ENCODE measurements at regions of chr6 and their contacts with region 1.

Region 1: DNA sequence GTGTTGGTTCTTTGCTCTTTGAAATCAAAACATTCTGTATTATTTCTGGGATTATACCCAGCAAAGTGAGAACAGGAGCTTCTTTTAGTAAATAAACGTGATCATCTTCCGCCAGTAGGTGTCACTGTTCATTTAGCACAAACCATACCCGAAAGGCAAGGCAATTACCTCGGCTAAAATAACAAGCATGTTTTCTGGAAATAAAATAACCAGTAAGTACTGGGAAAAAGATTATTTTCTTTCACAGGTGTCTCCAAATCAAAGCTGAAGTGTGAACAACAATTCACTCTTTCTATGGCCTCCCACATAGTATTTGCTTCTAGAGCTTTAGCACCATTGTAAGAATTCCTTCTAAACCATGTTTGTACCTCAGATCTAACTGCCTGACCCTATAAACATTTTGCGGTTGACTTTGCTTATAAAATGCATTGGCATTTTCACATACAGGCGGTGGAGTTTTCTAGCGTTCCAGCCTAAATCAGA is 144.6 kb upstream of the AGPAT4 start:
- DNase-seq: peak; percentile 61
- H3K4me3 ChIP-seq: no peak overlapping the region
- H3K27ac ChIP-seq: peak overlapping the region in 1 of 2 experiments; percentile 70; a peak in 2 of 4 replicates
- H3K4me1 ChIP-seq: peaks cover 0 to 22% of the 10 kb centered on the region in 2 experiments; a peak in 2 of 4 replicates
- H3K27me3 ChIP-seq: no peaks in the 10 kb centered on the region
- CTCF ChIP-seq: peak; percentile 82
- EP300 ChIP-seq: no peak
- RAD21 ChIP-seq: peak; percentile 85

Region 2: GRCh38 chr6:161400671-161401070 is 17.8 kb before region 1 on chr6:
- CTCF ChIA-PET with region 1: interaction called, 52 read pairs
- POLR2A ChIA-PET with region 1: no interaction called
- DNase-seq: no peak
- H3K4me3 ChIP-seq: no peak overlapping the region
- H3K27ac ChIP-seq: no peak overlapping the region
- H3K4me1 ChIP-seq: peaks cover 0 to 17% of the 10 kb centered on the region in 2 experiments; a peak in 1 of 4 replicates
- H3K27me3 ChIP-seq: 0 out of 2 replicates have a peak, but pooled peaks cover 4% of the 10 kb centered on the region
- CTCF ChIP-seq: no peak
- EP300 ChIP-seq: no peak
- RAD21 ChIP-seq: no peak

Region 3: DNA sequence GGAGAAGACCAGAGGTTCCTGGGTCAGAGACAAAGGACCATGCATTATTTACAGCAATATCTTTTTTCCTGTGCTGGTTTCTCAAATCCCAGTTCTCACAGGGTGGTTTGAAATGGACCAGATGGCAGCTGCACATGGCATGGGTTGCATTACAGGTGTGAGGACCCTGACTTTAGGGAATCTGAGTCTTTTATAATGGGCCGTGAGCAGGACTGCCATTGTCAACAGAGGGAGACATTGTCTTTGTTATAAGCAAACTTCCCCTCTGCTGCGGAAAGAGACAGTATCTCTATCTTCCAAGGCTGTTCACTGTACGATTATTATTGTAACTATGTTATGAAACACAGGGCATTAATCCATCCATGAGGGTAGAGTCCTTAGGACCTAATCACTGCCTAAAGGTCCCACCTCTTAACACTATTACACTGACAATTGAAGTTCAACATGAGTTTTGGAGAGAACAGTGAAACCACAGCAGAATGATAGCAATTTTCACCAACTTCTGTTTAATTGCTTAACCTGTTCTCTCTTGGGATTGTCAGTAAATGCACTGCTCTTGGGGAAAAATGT is 11.5 kb after region 1 on chr6:
- CTCF ChIA-PET with region 1: interaction called, 36 read pairs
- POLR2A ChIA-PET with region 1: no interaction called
- DNase-seq: no peak
- H3K4me3 ChIP-seq: no peak overlapping the region
- H3K27ac ChIP-seq: no peak overlapping the region
- H3K4me1 ChIP-seq: peaks cover 0 to 2% of the 10 kb centered on the region in 2 experiments; a peak in 1 of 4 replicates
- H3K27me3 ChIP-seq: no peaks in the 10 kb centered on the region
- CTCF ChIP-seq: peak; percentile 48
- EP300 ChIP-seq: no peak
- RAD21 ChIP-seq: peak; percentile 44

Region 4: DNA sequence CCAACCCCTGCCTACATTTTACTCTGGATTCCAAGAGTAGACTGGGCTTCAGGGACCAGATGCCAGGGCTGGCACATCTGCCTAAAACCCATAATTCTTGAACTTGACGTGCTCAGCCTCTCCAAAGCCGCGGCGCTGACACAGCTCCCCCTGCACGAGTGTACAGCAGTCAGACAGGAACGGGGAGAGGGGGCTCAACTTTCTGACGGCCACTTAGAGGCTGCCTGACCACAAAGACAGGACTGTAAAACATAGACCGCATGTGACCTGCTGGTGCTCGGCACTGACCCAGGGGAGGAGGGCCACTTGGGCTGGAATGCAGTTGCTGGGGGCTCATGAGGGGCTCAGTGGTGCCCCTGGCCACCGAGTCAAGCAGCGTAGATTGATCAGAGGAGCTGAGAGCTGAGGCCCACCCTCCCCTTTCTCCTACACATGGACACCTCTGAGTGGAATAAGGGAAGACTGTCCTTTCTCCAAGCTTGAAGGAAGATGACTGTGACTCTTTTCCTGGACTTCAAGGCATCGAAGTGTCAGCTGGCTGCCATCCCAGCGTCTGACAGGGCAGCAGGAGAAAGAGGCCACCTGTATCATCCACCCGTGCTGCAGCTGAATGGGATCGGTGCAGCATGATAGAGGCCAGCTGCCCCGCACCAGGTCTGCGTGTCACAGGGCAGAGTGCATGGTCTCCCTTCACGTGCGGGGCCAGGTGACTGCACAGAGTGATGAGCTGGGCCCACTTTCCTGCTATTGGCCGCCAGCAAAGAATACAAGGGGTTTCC is 26.7 kb after region 1 on chr6:
- CTCF ChIA-PET with region 1: interaction called, 41 read pairs
- POLR2A ChIA-PET with region 1: no interaction called
- DNase-seq: no peak
- H3K4me3 ChIP-seq: no peak overlapping the region
- H3K27ac ChIP-seq: no peak overlapping the region
- H3K4me1 ChIP-seq: peaks cover 0 to 18% of the 10 kb centered on the region in 2 experiments; a peak in 1 of 4 replicates
- H3K27me3 ChIP-seq: no peaks in the 10 kb centered on the region
- CTCF ChIP-seq: no peak
- EP300 ChIP-seq: no peak
- RAD21 ChIP-seq: no peak

Region 5: DNA sequence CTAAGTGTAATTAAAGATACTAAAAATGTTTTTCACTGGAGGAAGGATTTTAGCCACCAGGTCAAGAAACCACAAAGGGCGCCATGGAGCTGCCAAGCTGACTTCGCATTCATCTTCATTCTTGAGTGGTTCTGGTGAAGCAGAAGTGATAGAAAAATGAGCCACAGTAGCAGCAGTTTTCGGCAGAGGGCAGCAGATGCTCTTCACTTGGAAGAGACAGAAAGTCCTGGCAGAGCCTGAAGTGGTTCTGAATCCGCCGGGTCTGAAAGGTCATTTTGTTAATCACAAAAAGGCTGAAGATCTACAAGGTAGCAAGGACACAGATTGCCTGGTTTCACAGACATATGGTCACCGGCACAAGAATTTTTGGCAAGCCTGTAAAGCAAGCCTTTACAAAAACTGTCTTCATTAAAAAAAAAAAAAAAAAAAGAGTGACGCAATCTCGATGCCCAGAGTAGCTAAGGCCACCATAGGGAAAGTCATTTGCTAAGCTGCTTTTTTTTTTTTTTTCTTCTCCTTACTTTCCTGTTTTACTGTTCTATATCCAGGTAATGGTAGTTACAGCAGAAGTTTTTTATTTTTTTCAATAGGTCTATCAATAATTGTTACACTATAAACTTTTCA is 200.4 kb after region 1 on chr6:
- CTCF ChIA-PET with region 1: interaction called, 21 read pairs
- POLR2A ChIA-PET with region 1: no interaction called
- DNase-seq: peak; percentile 64
- H3K4me3 ChIP-seq: no peak overlapping the region
- H3K27ac ChIP-seq: no peak overlapping the region
- H3K4me1 ChIP-seq: peaks cover 0 to 10% of the 10 kb centered on the region in 2 experiments; a peak in 2 of 4 replicates
- H3K27me3 ChIP-seq: no peaks in the 10 kb centered on the region
- CTCF ChIP-seq: peak; percentile 63
- EP300 ChIP-seq: no peak
- RAD21 ChIP-seq: peak; percentile 87

Region 6: GRCh38 chr6:161744211-161745067 is 325.9 kb after region 1 on chr6:
- CTCF ChIA-PET with region 1: interaction called, 12 read pairs
- POLR2A ChIA-PET with region 1: no interaction called
- DNase-seq: peak; percentile 66
- H3K4me3 ChIP-seq: no peak overlapping the region
- H3K27ac ChIP-seq: peak overlapping the region in 1 of 2 experiments; percentile 71; a peak in 2 of 4 replicates
- H3K4me1 ChIP-seq: peaks cover 0 to 19% of the 10 kb centered on the region in 2 experiments; a peak in 2 of 4 replicates
- H3K27me3 ChIP-seq: no peaks in the 10 kb centered on the region
- CTCF ChIP-seq: no peak
- EP300 ChIP-seq: peak in 1 of 2 experiments; percentile 84; a peak in 2 of 4 replicates
- RAD21 ChIP-seq: no peak

Measured in SK-N-SH (cell line).